ENCODE measurements at regions of chr2 and their contacts with region 1.

Region 1: GRCh38 chr2:84459018-84459943 is at the start of gene SUCLG1:
- DNase-seq: peak; percentile 78
- ATAC-seq: peak; percentile 98
- H3K4me3 Mint-ChIP-seq: peak within 1 kb of the TSS; percentile 93
- H3K27ac Mint-ChIP-seq: peak within 1 kb of the TSS; percentile 98
- H3K4me1 Mint-ChIP-seq: peaks cover 33% of the 10 kb centered on the region
- H3K27me3 Mint-ChIP-seq: no peaks in the 10 kb centered on the region
- CTCF ChIP-seq: no peak
- total RNA-seq, gene SUCLG1: 45.3 and 45.9 TPM in 2 replicates

Region 2: GRCh38 chr2:84516234-84516986 is 57.1 kb after region 1 on chr2 and contains the start of gene DNAH6:
- CTCF ChIA-PET with region 1: no interaction called
- POLR2A ChIA-PET with region 1: no interaction called
- intact Hi-C with region 1: loop called (anchors 2 kb)
- DNase-seq: peak; percentile 55
- ATAC-seq: peak; percentile 96
- H3K4me3 Mint-ChIP-seq: peak within 1 kb of the TSS; percentile 81
- H3K27ac Mint-ChIP-seq: peak within 1 kb of the TSS; percentile 46
- H3K4me1 Mint-ChIP-seq: peaks cover 6% of the 10 kb centered on the region
- H3K27me3 Mint-ChIP-seq: peaks cover 15% of the 10 kb centered on the region
- CTCF ChIP-seq: no peak
- total RNA-seq, gene DNAH6: 0.34 and 0.82 TPM in 2 replicates